ENCODE measurements at regions of chr1 and their contacts with region 1.

Region 1: GRCh38 chr1:152052606-152053005 is 15.8 kb upstream of the S100A11 start:
- DNase-seq: peak in 3 of 4 donors; percentile 79 to 91 (median 85)
- ATAC-seq: peak; percentile 47
- H3K4me3 ChIP-seq: no peak overlapping the region
- H3K27ac ChIP-seq: no peak overlapping the region
- H3K4me1 ChIP-seq: peaks cover 8 to 52% of the 10 kb centered on the region in 2 donors
- H3K27me3 ChIP-seq: peaks cover 21 to 44% of the 10 kb centered on the region in 2 donors
- CTCF ChIP-seq: peak; percentile 92 to 96

Region 2: GRCh38 chr1:151198255-151199127 is 854.1 kb before region 1 on chr1 and contains the start of gene PIP5K1A:
- intact Hi-C with region 1: no loop called
- DNase-seq: peak; percentile 97 to 99 (median 98)
- ATAC-seq: peak; percentile 83
- H3K4me3 ChIP-seq: peak within 1 kb of the TSS; percentile 67 to 71
- H3K27ac ChIP-seq: peak within 1 kb of the TSS; percentile 87 to 95
- H3K4me1 ChIP-seq: peaks cover 3 to 45% of the 10 kb centered on the region in 2 donors
- H3K27me3 ChIP-seq: no peaks in the 10 kb centered on the region
- CTCF ChIP-seq: no peak
- polyA plus RNA-seq, gene PIP5K1A: 62.1 to 73.3 (median 68.3) TPM

Region 3: GRCh38 chr1:152182431-152182830 is 129.8 kb after region 1 on chr1:
- intact Hi-C with region 1: loop called (anchors 5 to 10 kb)
- DNase-seq: no peak
- ATAC-seq: peak; percentile 51
- H3K4me3 ChIP-seq: no peak overlapping the region
- H3K27ac ChIP-seq: no peak overlapping the region
- H3K4me1 ChIP-seq: no peaks in the 10 kb centered on the region
- H3K27me3 ChIP-seq: no peaks in the 10 kb centered on the region
- CTCF ChIP-seq: peak; percentile 24 to 32

Region 4: GRCh38 chr1:152448095-152448494 is 395.5 kb after region 1 on chr1:
- intact Hi-C with region 1: loop called in 1 of 2 experiments (anchors 5 kb)
- DNase-seq: no peak
- ATAC-seq: no peak
- H3K4me3 ChIP-seq: no peak overlapping the region
- H3K27ac ChIP-seq: no peak overlapping the region
- H3K4me1 ChIP-seq: no peaks in the 10 kb centered on the region
- H3K27me3 ChIP-seq: no peaks in the 10 kb centered on the region
- CTCF ChIP-seq: no peak

Measured in left lung (tissue), 14 donors.